PC-3 (cell line): ENCODE measurements at regions of chr15 and their contacts with region 1.

Region 1: DNA sequence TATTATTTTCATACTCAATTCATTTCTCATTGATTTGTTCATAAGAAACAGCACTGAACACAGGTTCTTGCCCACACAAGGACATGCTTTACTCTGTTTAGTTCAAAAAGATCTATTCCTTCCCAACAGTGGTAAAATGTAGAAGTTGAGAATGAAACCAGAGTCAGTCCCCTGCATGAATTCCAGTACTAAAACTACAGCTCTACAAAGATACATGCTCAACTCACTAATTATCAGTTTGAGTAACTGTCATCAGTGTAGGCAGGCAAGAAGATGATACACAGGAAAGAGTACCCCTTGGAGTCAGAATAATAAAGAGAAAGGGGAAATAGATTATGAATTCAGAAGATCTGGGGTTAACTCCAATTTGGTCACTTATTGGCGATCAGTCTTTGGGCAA is 43.2 kb downstream of the NR2E3 start:
- DNase-seq: no peak
- ATAC-seq: no peak
- H3K4me3 ChIP-seq: no peak overlapping the region
- H3K27ac ChIP-seq: no peak overlapping the region
- H3K4me1 ChIP-seq: no peaks in the 10 kb centered on the region
- H3K27me3 ChIP-seq: no peaks in the 10 kb centered on the region
- CTCF ChIP-seq: no peak

Region 2: GRCh38 chr15:70902107-70902506 is 951.4 kb before region 1 on chr15:
- CTCF ChIA-PET with region 1: interaction called, 14 read pairs
- POLR2A ChIA-PET with region 1: no interaction called
- intact Hi-C with region 1: no loop called
- DNase-seq: peak; percentile 85
- ATAC-seq: peak; percentile 95
- H3K4me3 ChIP-seq: no peak overlapping the region
- H3K27ac ChIP-seq: peak overlapping the region; percentile 88
- H3K4me1 ChIP-seq: peaks cover 17% of the 10 kb centered on the region
- H3K27me3 ChIP-seq: no peaks in the 10 kb centered on the region
- CTCF ChIP-seq: no peak